CD4-positive, alpha-beta memory T cell (primary cell): ENCODE measurements at regions of chr12 and their contacts with region 1.

Region 1: GRCh38 chr12:54294152-54294952 is 6.5 kb downstream of the NFE2 start:
- DNase-seq: peak; percentile 40 to 50 (median 45)
- H3K4me3 ChIP-seq: no peak overlapping the region
- H3K4me3 Mint-ChIP-seq: no peak overlapping the region
- H3K27ac ChIP-seq: no peak overlapping the region
- H3K27ac Mint-ChIP-seq: no peak overlapping the region
- H3K4me1 ChIP-seq: peaks cover 7% of the 10 kb centered on the region
- H3K4me1 Mint-ChIP-seq: peaks cover 4 to 8% (median 6%) of the 10 kb centered on the region in 4 donors
- H3K27me3 ChIP-seq: no peaks in the 10 kb centered on the region
- H3K27me3 Mint-ChIP-seq: peaks cover 2 to 10% of the 10 kb centered on the region in 2 donors

Region 2: DNA sequence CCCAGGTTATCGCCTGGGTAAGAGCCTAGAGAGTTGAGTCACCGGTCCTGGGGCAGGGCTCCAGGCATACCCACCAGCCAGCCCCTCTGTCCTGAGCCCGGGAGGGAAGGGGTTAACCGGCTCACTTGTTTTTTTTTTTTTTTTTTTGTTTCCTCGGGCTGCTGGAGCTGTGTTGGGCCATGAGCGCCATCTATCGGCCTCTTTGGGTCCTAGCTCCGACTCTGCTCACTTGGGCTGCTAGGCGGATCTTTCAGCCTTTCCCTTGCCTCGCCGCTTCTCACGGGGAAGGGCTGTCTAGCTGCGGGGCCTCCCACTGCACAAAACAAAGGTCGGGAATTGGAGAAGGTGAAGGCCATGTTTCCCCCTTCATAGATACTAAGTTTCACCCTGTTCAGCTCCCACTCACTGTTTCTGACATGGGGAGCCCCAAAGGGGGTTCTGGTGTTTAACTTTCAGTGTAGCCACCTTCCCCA is 102.8 kb before region 1 on chr12:
- CTCF ChIA-PET with region 1: no interaction called
- POLR2A ChIA-PET with region 1: no interaction called
- intact Hi-C with region 1: no loop called
- DNase-seq: peak; percentile 79 to 81 (median 79)
- H3K4me3 ChIP-seq: no peak overlapping the region
- H3K4me3 Mint-ChIP-seq: peak overlapping the region in 4 of 8 donors; percentile 11 to 66 (median 32)
- H3K27ac ChIP-seq: no peak overlapping the region
- H3K27ac Mint-ChIP-seq: peak overlapping the region in 2 of 7 donors; percentile 67 to 68
- H3K4me1 ChIP-seq: peaks cover 22% of the 10 kb centered on the region
- H3K4me1 Mint-ChIP-seq: peaks cover 17 to 60% (median 25%) of the 10 kb centered on the region in 4 donors
- H3K27me3 ChIP-seq: peaks cover 23% of the 10 kb centered on the region
- H3K27me3 Mint-ChIP-seq: peaks cover 20 to 32% of the 10 kb centered on the region in 2 donors

Region 3: GRCh38 chr12:54251667-54252284 is 42.6 kb before region 1 on chr12:
- CTCF ChIA-PET with region 1: interaction called, 43 read pairs
- POLR2A ChIA-PET with region 1: no interaction called
- intact Hi-C with region 1: loop called (anchors 5 kb)
- DNase-seq: peak in 4 of 5 donors; percentile 36 to 52 (median 46)
- H3K4me3 ChIP-seq: no peak overlapping the region
- H3K4me3 Mint-ChIP-seq: no peak overlapping the region
- H3K27ac ChIP-seq: no peak overlapping the region
- H3K27ac Mint-ChIP-seq: peak overlapping the region in 1 of 7 donors; percentile 63
- H3K4me1 ChIP-seq: no peaks in the 10 kb centered on the region
- H3K4me1 Mint-ChIP-seq: peaks cover 4 to 9% (median 6%) of the 10 kb centered on the region in 4 donors
- H3K27me3 ChIP-seq: no peaks in the 10 kb centered on the region
- H3K27me3 Mint-ChIP-seq: no peaks in the 10 kb centered on the region

Region 4: DNA sequence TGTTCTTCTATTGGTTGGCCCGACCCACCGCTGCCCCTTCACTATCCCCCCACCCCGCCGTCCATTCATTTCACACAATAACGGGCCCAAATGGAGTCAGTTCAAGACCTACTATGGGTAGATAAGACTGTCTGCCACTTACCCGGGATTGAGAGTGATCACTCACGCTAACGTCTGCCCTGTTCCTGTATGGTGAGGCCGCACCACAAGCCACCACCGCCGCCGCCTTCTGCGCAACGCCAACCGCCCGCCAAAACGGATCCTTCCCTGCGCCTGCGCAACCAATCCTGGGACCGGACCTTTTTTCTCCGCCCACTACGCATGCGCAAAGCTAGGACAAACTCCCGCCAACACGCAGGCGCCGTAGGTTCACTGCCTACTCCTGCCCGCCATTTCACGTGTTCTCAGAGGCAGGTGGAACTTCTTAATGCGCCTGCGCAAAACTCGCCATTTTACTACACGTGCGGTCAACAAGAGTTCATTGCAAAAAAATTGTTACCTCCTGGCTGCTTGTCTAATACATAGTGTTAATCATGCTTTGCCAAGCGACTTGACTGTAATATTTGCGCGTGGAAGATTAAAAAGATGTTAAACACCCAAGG is 14.4 kb before region 1 on chr12 and contains the start of gene CBX5:
- CTCF ChIA-PET with region 1: interaction called, 40 read pairs
- POLR2A ChIA-PET with region 1: interaction called, 61 read pairs
- intact Hi-C with region 1: no loop called
- DNase-seq: peak; percentile 99 to 100 (median 100)
- H3K4me3 ChIP-seq: peak within 1 kb of the TSS; percentile 90 to 94
- H3K4me3 Mint-ChIP-seq: no peak within 1 kb of the TSS
- H3K27ac ChIP-seq: peak within 1 kb of the TSS; percentile 92
- H3K27ac Mint-ChIP-seq: no peak within 1 kb of the TSS
- H3K4me1 ChIP-seq: peaks cover 76% of the 10 kb centered on the region
- H3K4me1 Mint-ChIP-seq: peaks cover 20 to 55% (median 34%) of the 10 kb centered on the region in 4 donors
- H3K27me3 ChIP-seq: no peaks in the 10 kb centered on the region
- H3K27me3 Mint-ChIP-seq: no peaks in the 10 kb centered on the region
- total RNA-seq, gene CBX5: 71.0 to 76.3 TPM

Region 5: GRCh38 chr12:54324617-54325441 is 30.5 kb after region 1 on chr12 and contains the start of gene COPZ1:
- CTCF ChIA-PET with region 1: interaction called, 23 read pairs
- POLR2A ChIA-PET with region 1: interaction called, 12 read pairs
- intact Hi-C with region 1: no loop called
- DNase-seq: peak; percentile 93 to 99 (median 95)
- H3K4me3 ChIP-seq: peak within 1 kb of the TSS; percentile 92 to 93
- H3K4me3 Mint-ChIP-seq: peak within 1 kb of the TSS; percentile 94 to 100 (median 98)
- H3K27ac ChIP-seq: peak within 1 kb of the TSS; percentile 86
- H3K27ac Mint-ChIP-seq: peak within 1 kb of the TSS; percentile 93 to 99 (median 98)
- H3K4me1 ChIP-seq: peaks cover 44% of the 10 kb centered on the region
- H3K4me1 Mint-ChIP-seq: peaks cover 28 to 47% (median 38%) of the 10 kb centered on the region in 4 donors
- H3K27me3 ChIP-seq: no peaks in the 10 kb centered on the region
- H3K27me3 Mint-ChIP-seq: no peaks in the 10 kb centered on the region
- total RNA-seq, gene COPZ1: 81.6 to 92.0 TPM

Region 6: DNA sequence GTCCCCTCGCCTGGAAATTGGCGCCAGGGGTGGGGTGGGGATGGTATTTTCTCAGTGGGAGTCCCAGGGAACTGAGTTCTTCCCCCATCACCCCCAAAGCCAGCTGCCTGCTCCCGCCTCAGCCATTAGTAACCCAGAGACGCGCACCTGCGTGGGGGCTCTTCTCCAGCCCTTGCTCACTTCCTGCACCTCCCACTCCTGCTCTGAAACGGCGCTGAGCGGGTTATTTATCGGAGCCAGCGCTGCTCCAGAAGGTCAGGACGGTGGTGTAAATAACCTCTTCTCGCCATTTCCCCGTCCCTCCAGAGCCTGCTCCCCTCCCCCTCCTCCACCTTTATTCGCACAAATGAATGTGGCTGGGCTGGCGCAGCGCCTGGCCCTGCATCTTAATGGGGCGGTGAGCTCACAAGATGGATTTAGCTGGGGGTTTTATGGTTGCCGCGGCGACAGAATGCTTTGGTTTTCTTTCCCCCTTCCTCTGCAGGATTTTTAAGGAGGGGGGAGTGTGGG is 57.7 kb after region 1 on chr12:
- CTCF ChIA-PET with region 1: interaction called, 12 read pairs
- POLR2A ChIA-PET with region 1: interaction called, 3 read pairs
- intact Hi-C with region 1: no loop called
- DNase-seq: no peak
- H3K4me3 ChIP-seq: no peak overlapping the region
- H3K4me3 Mint-ChIP-seq: peak overlapping the region; percentile 72 to 85 (median 76)
- H3K27ac ChIP-seq: no peak overlapping the region
- H3K27ac Mint-ChIP-seq: peak overlapping the region in 6 of 7 donors; percentile 70 to 91 (median 76)
- H3K4me1 ChIP-seq: peaks cover 14% of the 10 kb centered on the region
- H3K4me1 Mint-ChIP-seq: peaks cover 11 to 18% (median 12%) of the 10 kb centered on the region in 4 donors
- H3K27me3 ChIP-seq: no peaks in the 10 kb centered on the region
- H3K27me3 Mint-ChIP-seq: no peaks in the 10 kb centered on the region

Region 7: GRCh38 chr12:54368709-54369583 is 74.6 kb after region 1 on chr12:
- CTCF ChIA-PET with region 1: interaction called, 110 read pairs
- POLR2A ChIA-PET with region 1: interaction called, 5 read pairs
- intact Hi-C with region 1: loop called (anchors 1 kb)
- DNase-seq: peak; percentile 81 to 88 (median 84)
- H3K4me3 ChIP-seq: peak overlapping the region in 1 of 2 donors; percentile 27
- H3K4me3 Mint-ChIP-seq: peak overlapping the region; percentile 63 to 90 (median 76)
- H3K27ac ChIP-seq: peak overlapping the region; percentile 37
- H3K27ac Mint-ChIP-seq: peak overlapping the region; percentile 30 to 86 (median 79)
- H3K4me1 ChIP-seq: peaks cover 33% of the 10 kb centered on the region
- H3K4me1 Mint-ChIP-seq: peaks cover 20 to 50% (median 31%) of the 10 kb centered on the region in 4 donors
- H3K27me3 ChIP-seq: no peaks in the 10 kb centered on the region
- H3K27me3 Mint-ChIP-seq: peaks cover 0 to 3% of the 10 kb centered on the region in 2 donors